PC-9 (cell line): ENCODE measurements at regions of chr10 and their contacts with region 1.

Region 1: DNA sequence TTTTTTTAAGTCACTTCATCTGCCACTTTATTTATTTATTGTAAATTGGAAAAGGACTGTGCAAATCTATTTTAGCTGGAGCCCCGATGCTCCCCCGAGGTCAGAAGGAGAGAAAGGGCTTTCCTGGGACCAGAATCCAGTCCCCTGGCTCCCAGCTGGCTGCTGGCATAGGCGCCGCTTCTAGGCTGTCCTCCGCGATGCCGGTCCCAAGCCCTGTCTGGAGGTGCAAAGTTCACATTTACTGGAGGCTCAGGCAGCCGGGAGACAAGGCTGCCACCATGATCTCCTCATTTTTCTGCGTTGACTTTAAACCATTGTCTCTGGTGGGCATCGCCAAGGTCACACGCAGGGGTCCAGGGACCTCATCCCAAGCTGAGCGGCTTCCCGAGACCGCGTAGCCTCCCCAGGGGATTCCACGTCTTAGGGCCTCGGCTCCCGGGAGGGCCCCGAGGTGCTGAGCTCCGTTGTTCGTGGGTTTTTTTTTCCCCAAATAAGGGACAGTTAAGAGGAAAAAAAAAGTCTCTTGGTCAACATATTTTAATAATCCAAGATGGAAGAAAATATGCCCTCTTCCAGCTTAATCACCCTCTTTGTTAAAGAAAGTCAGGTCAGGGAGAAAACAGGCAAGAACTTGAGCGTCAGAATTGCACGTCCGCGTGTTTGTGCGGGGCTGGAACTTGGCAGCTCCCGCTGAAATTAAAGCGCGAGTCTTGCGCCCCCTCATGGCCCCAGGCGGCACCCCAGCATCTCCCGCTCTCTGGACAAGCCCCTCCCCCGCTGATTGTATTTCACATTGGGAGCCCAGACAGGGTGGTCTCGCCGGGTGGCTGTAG is 11.9 kb downstream of the RGR start:
- DNase-seq: peak in 1 of 2 experiments; percentile 44
- H3K4me3 ChIP-seq: no peak overlapping the region
- H3K27ac ChIP-seq: no peak overlapping the region
- H3K4me1 ChIP-seq: no peaks in the 10 kb centered on the region
- H3K27me3 ChIP-seq: peaks cover 71% of the 10 kb centered on the region
- CTCF ChIP-seq: peak; percentile 55

Region 2: GRCh38 chr10:86163522-86164173 is 1906.9 kb after region 1 on chr10:
- CTCF ChIA-PET with region 1: no interaction called
- POLR2A ChIA-PET with region 1: no interaction called
- intact Hi-C with region 1: loop called (anchors 10 kb)
- DNase-seq: no peak
- H3K4me3 ChIP-seq: no peak overlapping the region
- H3K27ac ChIP-seq: no peak overlapping the region
- H3K4me1 ChIP-seq: no peaks in the 10 kb centered on the region
- H3K27me3 ChIP-seq: no peaks in the 10 kb centered on the region
- CTCF ChIP-seq: no peak